HCT116 (cell line): ENCODE measurements at regions of chr6 and their contacts with region 1.

Region 1: GRCh38 chr6:16684896-16685554 is 76.2 kb downstream of the ATXN1 start:
- DNase-seq: peak; percentile 24
- ATAC-seq: no peak
- H3K4me3 ChIP-seq: no peak overlapping the region
- H3K27ac ChIP-seq: no peak overlapping the region
- H3K4me1 ChIP-seq: peaks cover 52 to 62% of the 10 kb centered on the region in 2 experiments
- H3K27me3 ChIP-seq: no peaks in the 10 kb centered on the region
- CTCF ChIP-seq: no peak
- POLR2A ChIP-seq: no peak
- RAD21 ChIP-seq: no peak

Region 2: GRCh38 chr6:16450285-16450684 is 234.7 kb before region 1 on chr6:
- CTCF ChIA-PET with region 1: no interaction called
- POLR2A ChIA-PET with region 1: no interaction called
- RAD21 ChIA-PET with region 1: no interaction called
- intact Hi-C with region 1: no loop called
- DNase-seq: peak; percentile 38
- ATAC-seq: peak; percentile 85
- H3K4me3 ChIP-seq: peak overlapping the region in 1 of 2 experiments; percentile 1; a peak in 1 of 4 replicates
- H3K27ac ChIP-seq: peak overlapping the region; percentile 11; the same call in 1 of the 2 replicates
- H3K4me1 ChIP-seq: peaks cover 5 to 29% of the 10 kb centered on the region in 2 experiments
- H3K27me3 ChIP-seq: no peaks in the 10 kb centered on the region
- CTCF ChIP-seq: no peak
- POLR2A ChIP-seq: no peak
- RAD21 ChIP-seq: no peak

Region 3: DNA sequence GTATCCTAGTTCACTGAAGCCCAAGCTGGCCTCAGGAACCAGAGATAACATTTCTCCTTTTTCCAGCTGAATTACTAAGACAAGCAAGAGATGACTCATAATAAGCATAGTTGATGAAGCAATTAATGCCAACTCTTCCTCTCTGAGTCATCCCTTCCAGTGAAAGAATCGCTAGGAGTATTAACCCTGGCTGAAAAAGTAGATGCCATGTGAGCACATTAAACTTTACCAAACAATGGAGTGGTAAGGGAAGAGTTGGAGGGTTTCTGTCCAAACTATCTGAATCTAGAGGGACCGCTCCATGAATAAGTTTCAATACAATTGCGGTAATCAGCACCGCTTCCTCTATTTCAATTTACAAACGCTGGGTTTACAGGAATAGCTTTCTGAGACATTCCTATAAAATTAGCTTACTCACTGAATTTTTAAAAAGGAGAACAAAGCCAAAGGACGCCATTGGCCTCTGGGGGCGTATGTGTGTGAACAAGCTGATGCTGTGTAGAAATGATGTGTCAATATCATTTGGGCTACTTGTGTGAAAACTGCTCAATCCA is 28.0 kb after region 1 on chr6:
- CTCF ChIA-PET with region 1: interaction called, 3 read pairs
- POLR2A ChIA-PET with region 1: interaction called, 10 read pairs
- RAD21 ChIA-PET with region 1: interaction called in 1 of 2 experiments, 3 read pairs
- intact Hi-C with region 1: loop called (anchors 1 kb)
- DNase-seq: peak; percentile 91
- ATAC-seq: peak; percentile 68
- H3K4me3 ChIP-seq: peak overlapping the region; percentile 8 to 38; a peak in 3 of 4 replicates
- H3K27ac ChIP-seq: peak overlapping the region; percentile 89
- H3K4me1 ChIP-seq: peaks cover 33 to 40% of the 10 kb centered on the region in 2 experiments
- H3K27me3 ChIP-seq: no peaks in the 10 kb centered on the region
- CTCF ChIP-seq: peak in 2 of 3 experiments; percentile 47 to 57; a peak in 4 of 6 replicates
- POLR2A ChIP-seq: peak; percentile 35
- RAD21 ChIP-seq: peak; percentile 28

Region 4: GRCh38 chr6:16723826-16724225 is 38.8 kb after region 1 on chr6:
- CTCF ChIA-PET with region 1: no interaction called
- POLR2A ChIA-PET with region 1: interaction called, 6 read pairs
- RAD21 ChIA-PET with region 1: no interaction called
- intact Hi-C with region 1: loop called (anchors 1 kb)
- DNase-seq: peak; percentile 84
- ATAC-seq: peak; percentile 73
- H3K4me3 ChIP-seq: no peak overlapping the region
- H3K27ac ChIP-seq: peak overlapping the region; percentile 4; the same call in 1 of the 2 replicates
- H3K4me1 ChIP-seq: peaks cover 72 to 79% of the 10 kb centered on the region in 2 experiments
- H3K27me3 ChIP-seq: no peaks in the 10 kb centered on the region
- CTCF ChIP-seq: no peak
- POLR2A ChIP-seq: no peak
- RAD21 ChIP-seq: no peak

Region 5: GRCh38 chr6:17851001-17851719 is 1166.1 kb after region 1 on chr6:
- CTCF ChIA-PET with region 1: no interaction called
- POLR2A ChIA-PET with region 1: no interaction called
- RAD21 ChIA-PET with region 1: interaction called in 1 of 2 experiments, 11 read pairs
- intact Hi-C with region 1: no loop called
- DNase-seq: no peak
- ATAC-seq: no peak
- H3K4me3 ChIP-seq: no peak overlapping the region
- H3K27ac ChIP-seq: no peak overlapping the region
- H3K4me1 ChIP-seq: no peaks in the 10 kb centered on the region
- H3K27me3 ChIP-seq: no peaks in the 10 kb centered on the region
- CTCF ChIP-seq: no peak
- POLR2A ChIP-seq: no peak
- RAD21 ChIP-seq: no peak